Activated T-helper 1 cell treated with anti-CD3 and anti-CD28 coated beads, Interleukin-12 subunit alpha, Interleukin-12 subunit beta, Interleukin-2, Interleukin-4 antibody, amounts not matched to agents 30 ng/mL and 10 ng/mL and 1 ng/mL, durations not matched to agents 14 hours and 24 hours and 36 hours (primary cell): ENCODE measurements at regions of chr9 and their contacts with region 1.

Region 1: GRCh38 chr9:4679268-4680172 is at the start of gene CDC37L1:
- DNase-seq: peak; percentile 98
- H3K4me3 Mint-ChIP-seq: no peak within 1 kb of the TSS
- H3K27ac Mint-ChIP-seq: no peak within 1 kb of the TSS
- H3K4me1 Mint-ChIP-seq: peaks cover 7% of the 10 kb centered on the region
- H3K27me3 Mint-ChIP-seq: no peaks in the 10 kb centered on the region
- total RNA-seq, gene CDC37L1: 11.1 and 11.3 TPM in 2 replicates

Region 2: DNA sequence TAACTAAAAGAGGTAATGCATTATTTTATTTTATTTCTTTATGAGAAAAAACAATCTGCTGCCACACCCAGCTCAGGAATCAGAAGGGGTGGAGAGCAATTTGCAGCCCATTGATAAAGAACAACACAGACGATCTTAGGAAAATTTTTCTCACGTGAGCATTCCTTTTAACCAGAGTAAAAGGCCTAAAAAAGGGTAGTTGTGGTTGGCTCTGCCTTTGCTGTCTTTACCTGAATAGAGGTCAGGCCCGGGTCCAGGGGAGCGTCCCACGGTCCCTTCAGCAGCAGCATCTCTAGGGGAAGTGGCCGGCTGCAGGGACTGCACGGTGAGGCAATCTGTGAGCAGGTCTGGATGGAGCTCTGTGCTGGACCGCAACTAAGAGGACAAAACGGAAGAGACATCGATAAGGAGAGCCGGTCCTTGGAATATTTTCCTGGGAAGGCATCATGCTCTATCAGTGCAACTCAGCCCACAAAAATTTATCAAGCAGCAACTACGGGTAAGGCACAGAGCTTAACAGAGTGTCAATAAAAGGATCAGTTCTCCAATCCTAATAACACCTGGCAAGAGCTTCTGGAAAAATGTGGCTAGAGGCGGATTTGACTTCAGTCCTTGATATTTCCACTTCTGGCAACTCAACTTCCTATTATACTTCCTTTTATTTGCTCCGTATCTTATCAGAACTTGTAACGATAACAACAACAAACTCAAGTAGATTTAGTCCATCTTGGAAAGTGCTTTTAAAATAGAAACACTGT is 780.9 kb before region 1 on chr9:
- intact Hi-C with region 1: no loop called
- DNase-seq: no peak
- H3K4me3 Mint-ChIP-seq: no peak overlapping the region
- H3K27ac Mint-ChIP-seq: no peak overlapping the region
- H3K4me1 Mint-ChIP-seq: no peaks in the 10 kb centered on the region
- H3K27me3 Mint-ChIP-seq: no peaks in the 10 kb centered on the region

Region 3: DNA sequence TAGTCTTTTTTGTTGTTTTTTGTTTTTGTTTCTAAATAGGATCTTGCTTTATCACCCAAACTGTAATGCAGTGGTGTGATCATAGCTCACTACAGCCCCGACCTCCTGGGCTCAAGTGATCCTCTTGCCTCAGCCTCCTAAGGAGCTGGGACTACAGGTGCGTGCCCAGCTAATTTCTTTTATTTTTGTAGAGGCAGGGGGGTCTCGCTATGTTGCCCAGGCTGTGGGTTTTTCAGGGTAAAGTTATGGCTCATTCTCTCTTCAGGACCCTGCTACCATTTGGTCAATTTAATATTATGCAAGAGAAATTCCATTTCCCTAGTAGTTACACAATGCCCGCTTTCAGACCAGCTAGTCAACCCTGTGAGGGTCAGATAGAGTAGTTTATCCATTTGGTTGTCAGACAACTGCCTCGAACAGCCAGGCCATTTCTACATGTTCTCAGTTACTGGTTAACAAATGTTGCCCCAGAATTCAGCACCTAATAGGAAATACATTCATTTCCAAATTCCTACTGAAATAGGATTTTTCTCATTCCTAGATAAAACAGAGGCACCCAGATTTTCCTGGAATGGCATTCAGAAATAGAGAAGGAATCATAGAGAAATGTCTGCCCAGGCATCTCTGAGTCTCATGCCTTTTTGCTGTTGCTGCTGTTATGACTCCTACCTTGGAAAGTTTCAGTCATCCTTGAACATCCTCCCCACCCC is 373.3 kb before region 1 on chr9:
- intact Hi-C with region 1: loop called (anchors 5 kb)
- DNase-seq: no peak
- H3K4me3 Mint-ChIP-seq: peak overlapping the region; percentile 40
- H3K27ac Mint-ChIP-seq: peak overlapping the region; percentile 76
- H3K4me1 Mint-ChIP-seq: peaks cover 58% of the 10 kb centered on the region
- H3K27me3 Mint-ChIP-seq: peaks cover 14% of the 10 kb centered on the region

Region 4: GRCh38 chr9:4662108-4662988 is 17.2 kb before region 1 on chr9 and contains the start of gene PLPP6:
- intact Hi-C with region 1: loop called (anchors 1 kb)
- DNase-seq: peak; percentile 73
- H3K4me3 Mint-ChIP-seq: peak within 1 kb of the TSS; percentile 89
- H3K27ac Mint-ChIP-seq: peak within 1 kb of the TSS; percentile 88
- H3K4me1 Mint-ChIP-seq: peaks cover 59% of the 10 kb centered on the region
- H3K27me3 Mint-ChIP-seq: peaks cover 15% of the 10 kb centered on the region
- total RNA-seq, gene PLPP6: 5.3 and 5.7 TPM in 2 replicates

Region 5: DNA sequence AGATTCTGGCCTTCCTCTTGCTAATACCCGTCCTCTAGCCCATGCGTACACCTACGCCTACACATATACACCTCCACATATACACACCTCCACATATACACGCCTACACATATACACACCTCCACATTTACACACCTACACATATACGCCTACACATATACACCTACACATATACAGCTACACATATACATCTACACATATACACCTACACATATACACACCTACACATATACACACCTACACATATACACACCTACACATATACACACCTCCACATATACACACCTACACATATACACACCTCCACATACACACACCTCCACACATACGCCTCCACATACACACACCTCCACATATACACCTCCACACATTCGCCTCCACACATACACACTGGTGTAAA is 34.3 kb after region 1 on chr9:
- intact Hi-C with region 1: loop called (anchors 2 kb)
- DNase-seq: no peak
- H3K4me3 Mint-ChIP-seq: no peak overlapping the region
- H3K27ac Mint-ChIP-seq: peak overlapping the region; percentile 93
- H3K4me1 Mint-ChIP-seq: peaks cover 9% of the 10 kb centered on the region
- H3K27me3 Mint-ChIP-seq: no peaks in the 10 kb centered on the region

Region 6: GRCh38 chr9:4792572-4793458 is 113.3 kb after region 1 on chr9 and contains the start of gene RCL1:
- intact Hi-C with region 1: loop called (anchors 2 kb)
- DNase-seq: peak; percentile 99
- H3K4me3 Mint-ChIP-seq: peak within 1 kb of the TSS; percentile 96
- H3K27ac Mint-ChIP-seq: peak within 1 kb of the TSS; percentile 96
- H3K4me1 Mint-ChIP-seq: peaks cover 62% of the 10 kb centered on the region
- H3K27me3 Mint-ChIP-seq: no peaks in the 10 kb centered on the region
- total RNA-seq, gene RCL1: 53.3 and 53.4 TPM in 2 replicates

Region 7: GRCh38 chr9:5843794-5844504 is 1164.4 kb after region 1 on chr9:
- intact Hi-C with region 1: loop called (anchors 10 kb)
- DNase-seq: no peak
- H3K4me3 Mint-ChIP-seq: peak overlapping the region; percentile 69
- H3K27ac Mint-ChIP-seq: peak overlapping the region; percentile 88
- H3K4me1 Mint-ChIP-seq: peaks cover 88% of the 10 kb centered on the region
- H3K27me3 Mint-ChIP-seq: no peaks in the 10 kb centered on the region